Heart right ventricle (tissue), 16 donors: ENCODE measurements at regions of chr19 and their contacts with region 1.

Region 1: DNA sequence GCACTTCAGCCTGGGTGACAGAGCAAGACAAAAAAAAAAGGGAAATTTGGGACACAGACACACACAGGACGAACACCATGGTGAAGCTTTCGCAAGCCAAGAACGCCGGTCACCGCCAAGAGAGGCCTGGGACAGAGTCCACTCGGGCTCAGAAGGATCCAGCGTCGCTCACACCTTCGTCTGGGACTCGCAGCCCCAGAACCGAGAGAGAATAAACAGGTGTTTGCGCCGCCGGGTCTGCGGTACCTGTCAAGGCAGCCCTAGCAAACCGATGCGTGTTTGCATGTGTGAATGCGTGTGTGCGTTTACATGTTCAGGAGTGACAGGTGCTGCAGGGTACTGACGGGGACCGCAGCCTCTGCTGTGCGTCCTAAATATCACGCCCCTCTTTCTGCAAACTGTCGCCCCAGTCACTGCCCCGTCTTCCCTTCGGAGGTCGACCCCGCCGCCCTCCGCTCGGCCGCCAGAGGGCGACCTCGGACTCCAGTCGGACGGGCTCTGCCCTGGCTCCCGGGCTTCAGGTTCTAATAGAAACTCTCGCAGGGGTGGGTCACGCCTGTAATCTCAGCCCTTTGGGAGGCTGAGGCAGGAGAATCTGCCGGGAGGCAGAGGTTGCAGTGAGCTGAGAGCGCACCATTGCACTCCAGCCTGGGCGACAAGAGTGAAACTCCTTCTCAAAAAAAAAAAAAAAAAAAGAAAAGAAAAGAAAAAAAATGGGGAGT is 11.8 kb upstream of the CSNK1G2 start:
- DNase-seq: peak; percentile 69 to 83
- ATAC-seq: peak; percentile 87 to 95 (median 94)
- H3K4me3 ChIP-seq: peak overlapping the region in 9 of 10 donors; percentile 12 to 56 (median 45)
- H3K27ac ChIP-seq: peak overlapping the region in 1 of 10 donors; percentile 24
- H3K4me1 ChIP-seq: peaks cover 5 to 14% (median 12%) of the 10 kb centered on the region in 9 donors
- H3K27me3 ChIP-seq: no peaks in the 10 kb centered on the region
- CTCF ChIP-seq: peak; percentile 88 to 94 (median 91)

Region 2: DNA sequence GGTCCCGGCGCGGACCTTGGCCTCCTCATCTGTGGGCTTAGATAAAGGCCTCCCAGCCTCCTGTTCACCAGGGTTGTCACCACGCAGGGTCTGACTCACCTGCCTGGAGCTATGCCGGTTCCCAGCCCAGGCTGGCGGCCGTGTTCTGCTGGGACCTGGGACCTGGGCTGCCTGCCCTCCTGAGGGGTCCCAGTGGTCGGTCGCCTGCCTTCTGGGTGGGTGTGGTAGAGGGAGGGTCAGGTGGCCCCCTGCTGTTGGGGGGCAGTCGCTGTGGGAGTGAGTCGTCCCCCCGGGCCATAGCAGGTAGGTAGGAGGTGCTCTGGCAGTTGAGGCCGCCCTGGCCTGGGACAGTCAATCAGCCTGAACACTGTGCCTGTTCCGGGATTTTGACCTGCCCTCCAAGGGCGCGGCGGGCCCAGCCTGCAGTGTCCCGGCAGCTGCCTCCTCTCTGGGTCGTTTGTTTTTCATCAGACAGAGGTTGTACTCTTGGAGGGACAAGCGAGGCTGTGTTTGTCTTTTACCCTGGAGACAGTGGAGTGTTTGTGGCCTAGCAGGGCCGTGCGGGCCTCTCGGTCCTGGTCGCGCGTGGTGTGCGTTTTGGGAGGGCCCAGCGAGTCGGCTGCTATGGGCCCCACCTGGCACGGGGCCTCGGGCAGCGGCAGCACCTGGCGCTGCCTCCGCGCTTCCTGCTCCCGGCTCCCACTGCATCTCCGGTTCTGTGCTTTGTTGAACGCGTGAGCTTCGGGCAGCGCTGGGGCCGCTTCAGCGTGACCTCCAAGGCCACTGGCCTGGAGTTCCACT is 21.4 kb before region 1 on chr19:
- intact Hi-C with region 1: loop called in 1 of 10 experiments (anchors 2 kb)
- DNase-seq: no peak
- ATAC-seq: no peak
- H3K4me3 ChIP-seq: no peak overlapping the region
- H3K27ac ChIP-seq: no peak overlapping the region
- H3K4me1 ChIP-seq: peaks cover 0 to 57% (median 9%) of the 10 kb centered on the region in 9 donors
- H3K27me3 ChIP-seq: no peaks in the 10 kb centered on the region
- CTCF ChIP-seq: no peak

Region 3: DNA sequence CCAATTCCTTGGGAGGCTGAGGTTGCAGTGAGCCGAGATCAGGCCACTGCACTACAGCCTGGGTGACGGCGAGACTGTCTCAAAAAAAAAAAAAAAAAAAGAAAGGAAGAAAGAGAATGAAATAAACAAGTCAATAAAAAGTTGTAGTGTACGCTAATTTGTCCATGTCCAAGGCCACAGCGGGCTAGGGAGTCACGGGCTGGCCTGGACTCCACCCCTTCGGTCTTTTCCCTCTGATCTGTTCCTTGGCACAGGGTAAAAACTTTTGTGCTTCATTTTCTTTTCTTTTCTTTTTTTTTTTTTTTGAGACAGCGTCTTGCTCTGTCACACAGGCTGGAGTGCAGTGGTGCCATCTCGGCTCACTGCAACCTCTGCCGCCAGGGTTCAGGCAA is 141.2 kb after region 1 on chr19:
- intact Hi-C with region 1: loop called in 9 of 10 experiments (anchors 2 to 10 kb)
- DNase-seq: no peak
- ATAC-seq: no peak
- H3K4me3 ChIP-seq: no peak overlapping the region
- H3K27ac ChIP-seq: peak overlapping the region in 1 of 10 donors; percentile 11
- H3K4me1 ChIP-seq: peaks cover 0 to 28% (median 8%) of the 10 kb centered on the region in 9 donors
- H3K27me3 ChIP-seq: no peaks in the 10 kb centered on the region
- CTCF ChIP-seq: no peak